Activated CD8-positive, alpha-beta T cell treated with anti-CD3 and anti-CD28 coated beads, Interleukin-2, amount 10 ng/mL, durations not matched to agents 7 days and 5 days (primary cell): ENCODE measurements at regions of chr3 and their contacts with region 1.

Region 1: DNA sequence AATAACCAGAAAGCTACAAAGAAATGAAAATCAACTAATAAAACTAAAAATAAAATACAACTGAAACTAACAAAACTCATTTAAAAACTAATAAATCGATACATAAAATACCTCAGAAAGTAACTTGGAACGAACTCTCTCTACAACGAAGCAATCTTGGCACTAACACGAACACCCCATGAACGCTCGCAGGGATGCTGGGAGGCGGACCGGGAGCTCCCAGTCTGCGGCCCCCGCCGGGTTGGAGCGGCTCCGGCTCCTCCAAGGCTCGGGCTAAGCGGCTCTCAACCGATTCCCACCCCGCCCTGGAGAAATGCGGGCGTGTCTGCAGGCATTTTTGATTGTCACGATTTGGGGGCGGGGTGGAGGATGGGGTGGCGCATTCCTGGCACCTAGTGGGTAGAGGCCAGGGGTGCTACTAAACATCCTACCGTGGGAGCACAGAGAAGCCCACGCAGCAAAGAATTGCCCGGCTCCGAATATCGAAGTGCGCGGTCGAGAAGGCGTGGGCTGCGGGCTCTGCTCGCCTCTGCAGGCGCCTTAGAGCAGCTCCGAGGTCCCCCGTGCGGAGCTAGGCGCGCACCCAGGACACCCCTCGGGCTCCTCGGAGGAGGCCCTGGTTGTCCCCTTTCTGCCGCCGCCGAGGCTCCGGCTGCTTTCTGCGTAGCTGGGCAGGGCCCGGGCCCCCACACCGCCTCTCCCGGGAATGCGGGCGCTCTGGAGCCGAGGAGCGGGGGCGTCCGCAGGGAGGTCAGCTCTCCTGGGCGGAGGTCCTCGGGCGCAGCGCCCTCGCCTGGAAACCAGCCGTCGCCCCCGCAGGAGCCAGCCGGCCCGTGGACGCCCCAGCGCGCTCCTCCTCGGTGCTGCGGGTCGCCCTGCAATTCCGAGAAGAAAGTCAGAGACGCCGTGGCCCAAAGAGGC is 16.4 kb upstream of the LAMP3 start:
- DNase-seq: peak; percentile 61
- ATAC-seq: peak; percentile 86
- H3K4me3 Mint-ChIP-seq: peak overlapping the region; percentile 78
- H3K27ac Mint-ChIP-seq: no peak overlapping the region
- H3K4me1 Mint-ChIP-seq: peaks cover 15% of the 10 kb centered on the region
- H3K27me3 Mint-ChIP-seq: peaks cover 31% of the 10 kb centered on the region

Region 2: GRCh38 chr3:183085634-183086390 is 93.1 kb before region 1 on chr3:
- CTCF ChIA-PET with region 1: no interaction called
- POLR2A ChIA-PET with region 1: no interaction called
- DNase-seq: peak; percentile 38
- ATAC-seq: no peak
- H3K4me3 Mint-ChIP-seq: no peak overlapping the region
- H3K27ac Mint-ChIP-seq: no peak overlapping the region
- H3K4me1 Mint-ChIP-seq: peaks cover 9% of the 10 kb centered on the region
- H3K27me3 Mint-ChIP-seq: no peaks in the 10 kb centered on the region

Region 3: DNA sequence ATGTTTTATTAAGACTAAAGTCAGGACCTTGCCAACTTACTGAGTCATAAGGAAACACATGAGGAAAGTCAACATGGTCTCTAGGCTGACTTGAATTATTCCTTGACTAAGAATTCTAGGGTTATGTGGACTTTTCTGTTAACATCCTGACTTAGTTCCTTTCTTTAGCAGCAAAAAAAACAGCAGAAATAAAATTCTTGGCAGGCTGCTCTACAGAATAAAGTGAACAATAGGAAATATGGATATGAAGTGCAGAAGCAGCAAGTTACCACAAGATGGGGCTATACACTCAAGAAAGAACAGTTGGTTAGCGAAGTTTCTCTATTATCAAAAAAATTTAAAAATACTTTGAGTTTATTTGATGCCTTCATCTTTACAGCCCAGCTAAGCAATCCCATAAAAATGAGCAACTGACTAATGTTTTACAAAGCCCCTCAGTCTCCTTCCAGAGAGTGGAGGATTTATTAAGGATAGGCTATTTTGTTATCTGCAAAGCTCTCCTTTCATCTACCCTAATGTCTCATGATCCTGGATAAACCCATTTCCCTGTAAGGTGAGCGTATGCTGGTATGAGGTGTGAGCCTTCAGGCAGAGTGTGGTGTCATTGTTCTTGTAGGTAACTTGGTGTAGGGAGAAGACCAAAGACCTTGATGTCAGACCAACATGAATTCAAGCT is 56.5 kb before region 1 on chr3:
- CTCF ChIA-PET with region 1: interaction called, 47 read pairs
- POLR2A ChIA-PET with region 1: no interaction called
- DNase-seq: no peak
- ATAC-seq: no peak
- H3K4me3 Mint-ChIP-seq: no peak overlapping the region
- H3K27ac Mint-ChIP-seq: no peak overlapping the region
- H3K4me1 Mint-ChIP-seq: peaks cover 5% of the 10 kb centered on the region
- H3K27me3 Mint-ChIP-seq: peaks cover 2% of the 10 kb centered on the region